T-cell (primary cell): ENCODE measurements at regions of chr1 and their contacts with region 1.

Region 1: GRCh38 chr1:36385410-36386257 is at the start of gene STK40:
- DNase-seq: peak; percentile 94 to 99 (median 98)
- ATAC-seq: peak; percentile 87 to 91 (median 88)
- H3K4me3 ChIP-seq: peak within 1 kb of the TSS; percentile 89 to 96
- H3K4me3 Mint-ChIP-seq: peak within 1 kb of the TSS; percentile 84 to 98 (median 90)
- H3K27ac ChIP-seq: peak within 1 kb of the TSS; percentile 89
- H3K27ac Mint-ChIP-seq: peak within 1 kb of the TSS; percentile 99
- H3K4me1 ChIP-seq: peaks cover 13 to 53% of the 10 kb centered on the region in 2 experiments
- H3K4me1 Mint-ChIP-seq: peaks cover 50 to 66% (median 60%) of the 10 kb centered on the region in 3 donors
- H3K27me3 ChIP-seq: no peaks in the 10 kb centered on the region
- H3K27me3 Mint-ChIP-seq: no peaks in the 10 kb centered on the region
- total RNA-seq, gene STK40: 29.6 to 71.1 (median 56.7) TPM

Region 2: DNA sequence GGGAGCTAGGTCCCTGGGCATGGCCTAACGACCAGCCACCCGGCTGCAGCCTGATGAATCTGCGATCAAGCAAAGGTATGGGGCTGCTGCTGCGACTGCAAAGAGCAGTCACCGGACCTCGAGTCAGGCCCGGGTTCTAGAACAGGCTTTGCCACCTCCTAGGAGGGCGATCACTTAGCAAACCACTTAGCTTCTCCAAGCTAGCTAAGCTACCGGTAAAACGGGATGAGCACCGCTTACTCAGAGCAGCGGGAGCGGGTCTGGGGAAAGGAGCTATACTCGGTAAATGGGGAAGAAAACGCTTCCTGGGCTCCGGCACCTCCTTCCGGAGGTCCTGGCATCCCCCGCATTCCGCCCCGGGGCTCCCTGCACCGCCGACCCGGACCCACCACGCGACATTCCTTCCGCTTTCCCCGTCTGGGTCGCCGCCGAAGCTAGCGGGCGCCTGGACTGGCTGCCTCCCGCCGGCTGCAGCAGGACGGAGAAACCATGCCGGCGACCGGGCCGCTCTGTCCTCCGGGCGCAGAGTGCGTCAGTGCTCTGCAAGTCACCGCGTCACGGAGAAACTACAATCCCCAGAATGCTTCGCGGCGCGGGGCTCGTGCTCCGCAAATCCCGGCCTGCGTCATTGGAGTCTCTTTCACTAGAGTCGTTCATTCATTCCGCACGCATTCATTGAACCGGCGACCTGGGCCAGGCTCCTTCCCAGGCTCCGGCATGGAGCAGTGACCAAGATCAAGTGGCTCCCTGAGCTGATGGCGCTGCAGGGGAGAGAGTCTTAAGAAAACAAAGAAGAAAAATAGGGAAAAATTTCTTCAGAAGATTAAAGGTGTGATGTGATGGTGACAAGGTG is 12.0 kb after region 1 on chr1 and contains the start of gene LSM10:
- CTCF ChIA-PET with region 1: interaction called in 1 of 2 experiments, 13 read pairs
- POLR2A ChIA-PET with region 1: interaction called, 5 to 6 read pairs
- DNase-seq: peak; percentile 79 to 95 (median 87)
- ATAC-seq: peak; percentile 91 to 94 (median 92)
- H3K4me3 ChIP-seq: peak within 1 kb of the TSS; percentile 83 to 89
- H3K4me3 Mint-ChIP-seq: peak within 1 kb of the TSS; percentile 84 to 99 (median 98)
- H3K27ac ChIP-seq: peak within 1 kb of the TSS; percentile 80
- H3K27ac Mint-ChIP-seq: peak within 1 kb of the TSS; percentile 96 to 98
- H3K4me1 ChIP-seq: peaks cover 4 to 45% of the 10 kb centered on the region in 2 experiments
- H3K4me1 Mint-ChIP-seq: peaks cover 35 to 45% (median 43%) of the 10 kb centered on the region in 3 donors
- H3K27me3 ChIP-seq: peaks cover 0 to 4% of the 10 kb centered on the region in 2 experiments
- H3K27me3 Mint-ChIP-seq: no peaks in the 10 kb centered on the region
- total RNA-seq, gene LSM10: 26.2 to 59.9 (median 55.4) TPM